ENCODE measurements at regions of chr1 and their contacts with region 1.

Region 1: GRCh38 chr1:15803354-15803753 is 4.1 kb downstream of the UQCRHL start:
- DNase-seq: peak in 6 of 9 donors; percentile 2 to 30 (median 16)
- ATAC-seq: peak; percentile 37
- H3K4me3 ChIP-seq: no peak overlapping the region
- H3K4me3 Mint-ChIP-seq: no peak overlapping the region
- H3K27ac ChIP-seq: no peak overlapping the region
- H3K27ac Mint-ChIP-seq: no peak overlapping the region
- H3K4me1 ChIP-seq: no peaks in the 10 kb centered on the region
- H3K4me1 Mint-ChIP-seq: no peaks in the 10 kb centered on the region
- H3K27me3 ChIP-seq: no peaks in the 10 kb centered on the region
- H3K27me3 Mint-ChIP-seq: peaks cover 0 to 15% (median 6%) of the 10 kb centered on the region in 5 donors

Region 2: DNA sequence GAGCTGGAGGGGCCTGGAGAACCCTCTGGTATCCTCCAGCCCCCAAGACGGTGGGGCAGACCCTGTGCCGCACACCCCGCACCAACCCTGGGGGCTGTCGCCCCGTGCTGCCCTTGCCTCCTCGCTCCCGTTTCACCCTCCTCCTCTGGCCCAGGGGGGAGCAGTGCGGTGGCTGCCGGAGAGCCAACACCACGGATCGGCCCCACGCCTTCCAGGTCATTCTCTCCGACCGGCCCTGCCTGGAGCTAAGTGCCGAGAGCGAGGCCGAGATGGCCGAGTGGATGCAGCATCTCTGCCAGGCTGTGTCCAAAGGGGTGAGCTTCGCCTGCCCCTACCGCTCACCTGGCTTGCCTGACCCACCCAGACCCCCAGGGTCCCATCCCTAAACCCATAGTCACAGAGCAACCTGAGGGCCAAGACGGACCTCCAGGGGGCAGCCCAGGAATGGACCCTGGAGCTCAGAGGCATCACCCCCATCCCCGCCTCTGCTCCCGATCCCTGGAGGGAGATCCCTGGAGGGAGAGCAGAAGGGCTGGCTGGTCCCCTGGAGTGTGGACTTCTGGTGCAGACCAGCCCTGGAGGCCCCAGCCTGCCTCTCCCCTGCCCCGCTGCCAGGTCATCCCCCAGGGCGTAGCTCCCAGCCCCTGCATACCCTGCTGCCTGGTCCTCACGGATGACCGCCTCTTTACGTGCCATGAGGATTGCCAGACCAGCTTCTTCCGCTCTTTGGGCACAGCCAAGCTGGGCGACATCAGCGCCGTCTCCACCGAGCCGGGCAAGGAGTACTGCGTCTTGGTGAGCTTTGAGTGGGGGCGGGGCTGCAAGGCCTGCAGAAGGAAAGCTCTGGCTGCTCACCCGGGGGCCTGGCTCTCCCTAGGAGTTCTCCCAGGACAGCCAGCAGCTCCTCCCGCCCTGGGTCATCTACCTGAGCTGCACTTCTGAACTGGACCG is 71.3 kb before region 1 on chr1:
- CTCF ChIA-PET with region 1: no interaction called
- POLR2A ChIA-PET with region 1: no interaction called
- intact Hi-C with region 1: no loop called
- DNase-seq: no peak
- ATAC-seq: no peak
- H3K4me3 ChIP-seq: no peak overlapping the region
- H3K4me3 Mint-ChIP-seq: no peak overlapping the region
- H3K27ac ChIP-seq: no peak overlapping the region
- H3K27ac Mint-ChIP-seq: no peak overlapping the region
- H3K4me1 ChIP-seq: no peaks in the 10 kb centered on the region
- H3K4me1 Mint-ChIP-seq: no peaks in the 10 kb centered on the region
- H3K27me3 ChIP-seq: no peaks in the 10 kb centered on the region
- H3K27me3 Mint-ChIP-seq: no peaks in the 10 kb centered on the region

Region 3: GRCh38 chr1:15994590-15995351 is 191.4 kb after region 1 on chr1:
- CTCF ChIA-PET with region 1: interaction called, 3 read pairs
- POLR2A ChIA-PET with region 1: no interaction called
- intact Hi-C with region 1: loop called in 1 of 2 experiments (anchors 1 kb)
- DNase-seq: peak in 4 of 9 donors; percentile 11 to 60 (median 30)
- ATAC-seq: peak; percentile 79
- H3K4me3 ChIP-seq: no peak overlapping the region
- H3K4me3 Mint-ChIP-seq: no peak overlapping the region
- H3K27ac ChIP-seq: no peak overlapping the region
- H3K27ac Mint-ChIP-seq: peak overlapping the region in 1 of 9 donors; percentile 9
- H3K4me1 ChIP-seq: no peaks in the 10 kb centered on the region
- H3K4me1 Mint-ChIP-seq: no peaks in the 10 kb centered on the region
- H3K27me3 ChIP-seq: no peaks in the 10 kb centered on the region
- H3K27me3 Mint-ChIP-seq: peaks cover 0 to 3% (median 0%) of the 10 kb centered on the region in 5 donors

Measured in naive thymus-derived CD4-positive, alpha-beta T cell (primary cell).